GM10248 (cell line): ENCODE measurements at regions of chr2 and their contacts with region 1.

Region 1: GRCh38 chr2:42974721-42975717 is 182.6 kb upstream of the HAAO start:
- DNase-seq: peak; percentile 63
- CTCF ChIP-seq: peak; percentile 85

Region 2: GRCh38 chr2:42964439-42965083 is 10.5 kb before region 1 on chr2:
- CTCF ChIA-PET with region 1: interaction called, 26 read pairs
- POLR2A ChIA-PET with region 1: no interaction called
- DNase-seq: no peak
- CTCF ChIP-seq: no peak

Region 3: GRCh38 chr2:43210467-43211303 is 235.7 kb after region 1 on chr2:
- CTCF ChIA-PET with region 1: no interaction called
- POLR2A ChIA-PET with region 1: no interaction called
- DNase-seq: no peak
- CTCF ChIP-seq: no peak